HepG2 (cell line): ENCODE measurements at regions of chr9 and their contacts with region 1.

Region 1: GRCh38 chr9:33404788-33405362 is 2.5 kb upstream of the AQP7 start:
- DNase-seq: no peak
- ATAC-seq: peak; percentile 70
- H3K4me3 ChIP-seq: no peak overlapping the region
- H3K27ac ChIP-seq: no peak overlapping the region
- H3K4me1 ChIP-seq: peaks cover 24% of the 10 kb centered on the region
- H3K27me3 ChIP-seq: peaks cover 7 to 28% of the 10 kb centered on the region in 2 experiments
- CTCF ChIP-seq: no peak; the same call in 1 of the 2 replicates
- EP300 ChIP-seq: no peak
- POLR2A ChIP-seq: no peak
- RAD21 ChIP-seq: no peak

Region 2: DNA sequence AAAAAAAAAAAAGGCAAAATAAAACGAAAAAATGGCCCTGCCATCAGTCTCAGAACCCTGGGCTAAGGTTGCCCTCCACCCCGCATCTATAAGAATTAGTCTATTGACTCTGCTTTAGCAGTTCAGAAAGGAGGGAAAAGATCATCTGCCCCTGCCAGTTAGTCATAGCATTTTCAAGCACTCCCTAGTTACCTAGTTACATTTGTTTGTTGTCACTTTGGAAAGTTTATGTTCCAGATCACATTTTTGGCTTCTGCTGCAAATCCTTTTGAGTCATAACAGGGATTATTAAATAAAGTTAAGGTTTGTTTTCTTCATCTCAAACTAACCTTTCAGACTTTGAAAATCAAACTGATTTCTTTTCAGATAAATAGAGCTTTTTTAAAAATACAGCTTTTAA is 54.6 kb before region 1 on chr9:
- CTCF ChIA-PET with region 1: no interaction called
- POLR2A ChIA-PET with region 1: no interaction called
- in situ Hi-C with region 1: no loop called
- intact Hi-C with region 1: no loop called
- DNase-seq: no peak
- ATAC-seq: peak; percentile 39
- H3K4me3 ChIP-seq: no peak overlapping the region
- H3K27ac ChIP-seq: no peak overlapping the region
- H3K4me1 ChIP-seq: no peaks in the 10 kb centered on the region
- H3K27me3 ChIP-seq: no peaks in the 10 kb centered on the region
- CTCF ChIP-seq: no peak
- EP300 ChIP-seq: no peak
- POLR2A ChIP-seq: no peak
- RAD21 ChIP-seq: no peak

Region 3: DNA sequence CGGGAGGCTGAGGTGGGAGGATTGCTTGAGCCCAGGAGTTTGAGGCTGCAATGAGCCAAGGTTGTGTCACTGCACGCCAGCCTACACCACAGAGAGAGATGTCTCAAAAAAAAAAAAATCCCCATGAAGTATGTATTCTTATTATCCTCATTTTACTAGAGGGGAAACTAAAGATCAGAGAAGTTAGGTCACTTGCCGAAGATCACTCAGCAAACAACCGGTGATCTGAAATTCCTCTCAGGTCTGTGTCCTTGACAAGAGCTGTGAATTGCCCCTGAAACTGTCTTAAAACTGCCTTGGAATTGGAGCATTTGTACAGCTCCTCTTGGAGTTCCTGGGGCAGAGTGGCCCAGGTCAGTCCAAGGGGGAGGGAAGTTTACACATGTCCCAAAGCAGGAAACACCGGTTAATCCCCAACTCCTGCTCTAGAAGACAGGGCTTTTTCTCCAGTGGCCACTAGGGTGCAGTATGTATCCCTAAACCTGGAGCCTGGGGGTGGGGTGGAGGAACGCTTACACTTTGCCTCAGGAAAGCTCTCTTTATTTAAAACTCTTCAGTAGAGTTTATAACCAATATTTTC is 30.2 kb before region 1 on chr9:
- CTCF ChIA-PET with region 1: interaction called, 11 read pairs
- POLR2A ChIA-PET with region 1: no interaction called
- in situ Hi-C with region 1: no loop called
- intact Hi-C with region 1: no loop called
- DNase-seq: peak; percentile 70
- ATAC-seq: peak; percentile 72
- H3K4me3 ChIP-seq: no peak overlapping the region
- H3K27ac ChIP-seq: no peak overlapping the region
- H3K4me1 ChIP-seq: peaks cover 31% of the 10 kb centered on the region
- H3K27me3 ChIP-seq: no peaks in the 10 kb centered on the region
- CTCF ChIP-seq: peak; percentile 84
- EP300 ChIP-seq: no peak
- POLR2A ChIP-seq: no peak
- RAD21 ChIP-seq: peak; percentile 74

Region 4: DNA sequence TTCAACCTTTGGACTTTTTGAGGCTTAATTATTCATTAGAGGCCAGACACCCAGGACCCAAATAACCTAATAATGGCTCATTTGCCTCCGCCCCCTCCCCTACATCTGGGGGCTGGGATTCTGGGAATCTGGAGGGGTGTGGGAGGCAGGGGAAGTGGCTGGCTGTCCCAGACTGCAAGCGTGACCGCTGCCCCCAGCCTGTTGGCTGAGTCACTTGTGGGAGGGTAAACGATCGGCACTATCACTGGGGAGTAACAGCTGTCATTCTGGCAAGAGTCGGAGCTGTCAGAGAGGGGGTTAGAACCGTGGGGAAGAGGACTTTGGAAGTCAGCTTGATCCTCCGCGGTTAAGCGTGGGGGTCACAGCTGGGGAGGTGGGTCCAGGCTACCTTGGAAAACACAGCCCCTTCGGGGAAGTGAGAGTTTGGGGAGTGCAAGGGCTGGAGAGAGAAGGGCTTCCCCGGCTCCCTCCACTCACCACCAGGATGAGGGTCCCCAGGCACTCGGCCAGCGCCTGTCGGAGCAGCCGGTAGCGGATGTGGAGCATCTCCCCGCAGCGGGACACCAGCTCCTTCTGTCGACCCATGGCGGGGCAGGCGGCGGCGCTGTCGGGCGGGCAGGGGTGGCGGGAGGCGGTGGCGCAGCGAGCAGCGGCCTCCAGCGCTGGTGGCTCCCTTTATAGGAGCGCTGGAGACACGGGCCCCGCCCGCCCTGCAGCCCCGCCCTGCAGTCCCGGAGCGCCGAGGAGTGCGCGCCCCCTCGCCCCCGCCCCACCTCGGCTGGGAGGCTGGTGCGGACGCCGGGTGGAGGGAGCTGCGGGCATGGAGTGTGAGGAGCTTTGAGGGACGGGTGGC is 42.3 kb after region 1 on chr9 and contains the start of gene AQP3:
- CTCF ChIA-PET with region 1: interaction called, 21 read pairs
- POLR2A ChIA-PET with region 1: interaction called, 6 read pairs
- in situ Hi-C with region 1: loop called (anchors 5 kb)
- intact Hi-C with region 1: loop called (anchors 2 kb)
- DNase-seq: peak; percentile 37
- ATAC-seq: peak; percentile 86
- H3K4me3 ChIP-seq: peak within 1 kb of the TSS; percentile 38 to 70 (median 51)
- H3K27ac ChIP-seq: no peak within 1 kb of the TSS
- H3K4me1 ChIP-seq: peaks cover 65% of the 10 kb centered on the region
- H3K27me3 ChIP-seq: peaks cover 8 to 48% of the 10 kb centered on the region in 2 experiments
- CTCF ChIP-seq: peak; percentile 67
- EP300 ChIP-seq: no peak
- POLR2A ChIP-seq: no peak
- RAD21 ChIP-seq: peak; percentile 76
- total RNA-seq, gene AQP3: 0.87 and 1.4 TPM in 2 replicates

Region 5: GRCh38 chr9:33466565-33467495 is 62.0 kb after region 1 on chr9:
- CTCF ChIA-PET with region 1: interaction called, 31 read pairs
- POLR2A ChIA-PET with region 1: interaction called, 10 read pairs
- in situ Hi-C with region 1: no loop called
- intact Hi-C with region 1: loop called (anchors 1 kb)
- DNase-seq: peak; percentile 19
- ATAC-seq: peak; percentile 88
- H3K4me3 ChIP-seq: no peak overlapping the region
- H3K27ac ChIP-seq: no peak overlapping the region
- H3K4me1 ChIP-seq: peaks cover 13% of the 10 kb centered on the region
- H3K27me3 ChIP-seq: no peaks in the 10 kb centered on the region
- CTCF ChIP-seq: peak; percentile 97
- EP300 ChIP-seq: no peak
- POLR2A ChIP-seq: no peak
- RAD21 ChIP-seq: peak; percentile 94

Region 6: DNA sequence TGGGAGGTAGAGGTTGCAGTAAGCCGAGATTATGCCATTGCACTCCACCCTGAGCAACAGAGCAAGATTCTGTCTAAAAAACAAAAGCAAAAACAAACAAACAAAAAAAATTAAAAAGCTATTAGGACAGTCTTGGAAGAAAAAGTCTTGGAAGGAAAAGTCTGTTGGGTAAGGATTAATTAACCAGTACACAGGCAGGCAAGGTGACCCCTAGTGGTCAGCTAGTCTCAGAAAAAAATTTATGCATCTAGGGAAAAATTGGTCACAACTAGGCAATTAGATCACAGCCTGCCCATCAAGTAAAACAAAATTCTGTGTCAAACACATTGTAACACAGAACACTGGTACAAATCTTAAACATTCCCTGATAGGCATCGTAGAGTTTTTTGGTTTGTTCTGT is 112.5 kb after region 1 on chr9:
- CTCF ChIA-PET with region 1: interaction called, 7 read pairs
- POLR2A ChIA-PET with region 1: no interaction called
- in situ Hi-C with region 1: no loop called
- intact Hi-C with region 1: loop called (anchors 5 kb)
- DNase-seq: peak; percentile 21
- ATAC-seq: peak; percentile 54; the same call in 2 of the 3 replicates
- H3K4me3 ChIP-seq: no peak overlapping the region
- H3K27ac ChIP-seq: no peak overlapping the region
- H3K4me1 ChIP-seq: 0 out of 2 replicates have a peak, but pooled peaks cover 6% of the 10 kb centered on the region
- H3K27me3 ChIP-seq: no peaks in the 10 kb centered on the region
- CTCF ChIP-seq: peak; percentile 48
- EP300 ChIP-seq: no peak
- POLR2A ChIP-seq: no peak
- RAD21 ChIP-seq: no peak